ENCODE measurements at regions of chr14 and their contacts with region 1.

Region 1: GRCh38 chr14:49867831-49868723 is 15.5 kb upstream of the NEMF start:
- DNase-seq: peak; percentile 99
- H3K4me3 Mint-ChIP-seq: peak overlapping the region; percentile 92
- H3K27ac Mint-ChIP-seq: peak overlapping the region; percentile 94
- H3K4me1 Mint-ChIP-seq: peaks cover 20% of the 10 kb centered on the region
- H3K27me3 Mint-ChIP-seq: no peaks in the 10 kb centered on the region

Region 2: GRCh38 chr14:49786315-49787110 is 81.6 kb before region 1 on chr14:
- CTCF ChIA-PET with region 1: no interaction called
- intact Hi-C with region 1: no loop called
- DNase-seq: no peak
- H3K4me3 Mint-ChIP-seq: no peak overlapping the region
- H3K27ac Mint-ChIP-seq: no peak overlapping the region
- H3K4me1 Mint-ChIP-seq: no peaks in the 10 kb centered on the region
- H3K27me3 Mint-ChIP-seq: no peaks in the 10 kb centered on the region

Region 3: DNA sequence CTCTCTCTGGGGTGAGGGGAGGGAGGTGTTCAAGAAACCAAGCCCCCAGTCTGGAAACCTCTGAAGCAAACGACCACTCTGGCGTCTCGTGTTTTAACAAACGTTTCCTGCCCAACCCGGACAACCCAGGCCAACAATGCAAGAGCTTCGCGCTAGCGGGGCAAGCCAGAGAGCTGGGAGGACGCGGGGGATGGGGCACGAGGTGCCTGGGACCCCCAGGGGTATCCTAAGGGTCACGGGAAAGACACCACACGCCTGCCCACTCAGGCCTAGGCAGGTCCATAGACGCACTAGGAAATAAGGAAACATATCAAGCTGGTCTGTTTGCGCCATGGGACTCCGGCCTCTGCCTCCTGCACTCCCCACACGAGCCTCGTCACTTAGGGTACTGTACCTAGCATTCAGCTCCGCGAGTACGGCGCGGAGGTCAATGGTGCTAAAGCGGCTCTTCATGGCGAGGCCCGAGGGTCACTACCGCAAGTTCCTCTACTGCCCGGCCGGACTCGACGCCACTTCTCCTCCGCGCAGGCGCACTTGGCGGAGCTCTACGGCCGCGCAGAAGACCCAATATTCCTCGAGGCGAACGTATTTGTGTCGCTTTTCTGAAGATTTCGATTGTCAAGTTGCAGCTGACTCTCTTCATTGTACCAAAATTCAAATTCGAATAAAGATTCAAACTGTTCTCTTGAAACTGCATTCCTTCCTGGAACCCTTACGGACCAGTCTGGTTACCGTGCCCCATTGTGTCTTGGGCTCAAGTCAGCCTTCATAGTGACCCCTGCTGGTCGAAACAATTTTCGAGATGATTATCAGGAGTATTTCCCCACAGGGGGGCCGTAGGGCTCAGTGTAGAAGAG is 15.5 kb before region 1 on chr14 and contains the start of gene NEMF:
- CTCF ChIA-PET with region 1: interaction called, 182 read pairs
- intact Hi-C with region 1: no loop called
- DNase-seq: peak; percentile 90
- H3K4me3 Mint-ChIP-seq: peak within 1 kb of the TSS; percentile 98
- H3K27ac Mint-ChIP-seq: peak within 1 kb of the TSS; percentile 97
- H3K4me1 Mint-ChIP-seq: peaks cover 37% of the 10 kb centered on the region
- H3K27me3 Mint-ChIP-seq: no peaks in the 10 kb centered on the region
- total RNA-seq, gene NEMF: 45.5 to 47.0 TPM

Region 4: GRCh38 chr14:49892636-49893308 is 24.7 kb after region 1 on chr14 and contains the start of gene ARF6:
- CTCF ChIA-PET with region 1: interaction called, 22 read pairs
- intact Hi-C with region 1: loop called (anchors 1 kb)
- DNase-seq: peak; percentile 98
- H3K4me3 Mint-ChIP-seq: peak within 1 kb of the TSS; percentile 100
- H3K27ac Mint-ChIP-seq: peak within 1 kb of the TSS; percentile 100
- H3K4me1 Mint-ChIP-seq: peaks cover 19% of the 10 kb centered on the region
- H3K27me3 Mint-ChIP-seq: no peaks in the 10 kb centered on the region
- total RNA-seq, gene ARF6: 128 to 129 TPM

Region 5: GRCh38 chr14:49971156-49972130 is 103.4 kb after region 1 on chr14:
- CTCF ChIA-PET with region 1: interaction called, 11 read pairs
- intact Hi-C with region 1: loop called (anchors 1 kb)
- DNase-seq: peak; percentile 69
- H3K4me3 Mint-ChIP-seq: peak overlapping the region; percentile 73
- H3K27ac Mint-ChIP-seq: peak overlapping the region; percentile 97
- H3K4me1 Mint-ChIP-seq: peaks cover 59% of the 10 kb centered on the region
- H3K27me3 Mint-ChIP-seq: no peaks in the 10 kb centered on the region

Region 6: GRCh38 chr14:50099335-50099734 is 231.3 kb after region 1 on chr14:
- CTCF ChIA-PET with region 1: interaction called, 49 read pairs
- intact Hi-C with region 1: no loop called
- DNase-seq: no peak
- H3K4me3 Mint-ChIP-seq: no peak overlapping the region
- H3K27ac Mint-ChIP-seq: no peak overlapping the region
- H3K4me1 Mint-ChIP-seq: peaks cover 57% of the 10 kb centered on the region
- H3K27me3 Mint-ChIP-seq: no peaks in the 10 kb centered on the region

Region 7: DNA sequence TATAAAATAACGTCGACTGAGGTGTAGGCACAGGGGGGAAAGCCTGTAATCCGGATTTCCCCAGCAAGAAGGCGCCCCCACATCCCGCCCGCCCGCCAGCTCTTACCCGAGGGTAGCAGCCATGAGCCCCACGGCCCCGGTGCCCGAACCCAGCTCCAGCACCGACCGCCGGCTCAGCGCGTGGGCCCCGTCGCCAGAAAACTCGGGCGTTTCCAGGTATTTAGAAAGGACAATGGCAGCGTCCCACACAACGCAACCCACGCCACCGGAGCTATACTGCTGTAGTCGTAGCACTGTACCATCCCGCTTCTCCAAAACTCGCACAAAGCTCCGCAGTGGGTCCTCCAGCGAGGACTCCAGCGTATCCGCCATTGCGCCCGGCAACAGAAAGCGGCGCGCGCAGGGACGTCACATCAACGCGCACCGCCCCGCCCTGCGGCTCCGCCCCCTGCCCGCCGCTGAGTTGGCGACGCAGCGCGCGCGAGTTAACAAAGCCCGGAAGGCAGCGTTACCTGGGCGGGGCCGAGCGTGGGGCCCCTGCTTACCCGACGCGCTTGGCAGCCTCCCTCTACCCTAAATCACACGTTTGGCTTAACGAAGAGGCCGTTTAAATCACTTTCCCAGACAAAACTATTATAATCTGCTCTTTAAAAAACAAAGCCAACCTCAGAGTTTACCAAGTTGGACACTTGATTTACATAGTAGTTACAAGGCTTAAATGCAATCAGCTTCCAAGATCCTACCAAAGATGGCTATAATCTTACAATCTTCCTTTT is 248.3 kb after region 1 on chr14 and contains the start of gene VCPKMT:
- CTCF ChIA-PET with region 1: interaction called, 7 read pairs
- intact Hi-C with region 1: loop called (anchors 1 kb)
- DNase-seq: peak; percentile 96
- H3K4me3 Mint-ChIP-seq: peak within 1 kb of the TSS; percentile 98
- H3K27ac Mint-ChIP-seq: peak within 1 kb of the TSS; percentile 94
- H3K4me1 Mint-ChIP-seq: peaks cover 32% of the 10 kb centered on the region
- H3K27me3 Mint-ChIP-seq: no peaks in the 10 kb centered on the region
- total RNA-seq, gene VCPKMT: 9.6 to 10.5 TPM

Region 8: DNA sequence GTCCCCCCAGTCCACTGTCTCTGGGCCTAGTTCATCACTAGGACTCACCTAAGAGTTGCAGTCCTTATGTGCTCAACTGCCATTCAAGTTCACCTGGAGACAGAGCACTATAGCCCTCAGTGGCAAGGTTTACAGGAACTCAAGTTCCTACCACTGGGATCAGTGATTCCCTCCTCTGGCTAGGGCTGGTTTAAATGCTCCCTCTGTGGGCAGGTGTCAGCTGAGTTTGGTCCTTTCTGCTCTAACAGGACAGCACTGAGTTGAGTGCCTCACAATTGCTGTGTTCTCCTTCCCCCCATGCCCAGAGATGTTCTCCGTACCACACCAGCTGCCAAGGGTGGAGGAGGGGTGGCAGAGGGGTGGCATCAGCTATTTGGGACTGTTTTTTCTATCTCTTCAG is 820.8 kb after region 1 on chr14:
- CTCF ChIA-PET with region 1: no interaction called
- intact Hi-C with region 1: no loop called
- DNase-seq: no peak
- H3K4me3 Mint-ChIP-seq: no peak overlapping the region
- H3K27ac Mint-ChIP-seq: no peak overlapping the region
- H3K4me1 Mint-ChIP-seq: no peaks in the 10 kb centered on the region
- H3K27me3 Mint-ChIP-seq: peaks cover 3% of the 10 kb centered on the region

Region 9: DNA sequence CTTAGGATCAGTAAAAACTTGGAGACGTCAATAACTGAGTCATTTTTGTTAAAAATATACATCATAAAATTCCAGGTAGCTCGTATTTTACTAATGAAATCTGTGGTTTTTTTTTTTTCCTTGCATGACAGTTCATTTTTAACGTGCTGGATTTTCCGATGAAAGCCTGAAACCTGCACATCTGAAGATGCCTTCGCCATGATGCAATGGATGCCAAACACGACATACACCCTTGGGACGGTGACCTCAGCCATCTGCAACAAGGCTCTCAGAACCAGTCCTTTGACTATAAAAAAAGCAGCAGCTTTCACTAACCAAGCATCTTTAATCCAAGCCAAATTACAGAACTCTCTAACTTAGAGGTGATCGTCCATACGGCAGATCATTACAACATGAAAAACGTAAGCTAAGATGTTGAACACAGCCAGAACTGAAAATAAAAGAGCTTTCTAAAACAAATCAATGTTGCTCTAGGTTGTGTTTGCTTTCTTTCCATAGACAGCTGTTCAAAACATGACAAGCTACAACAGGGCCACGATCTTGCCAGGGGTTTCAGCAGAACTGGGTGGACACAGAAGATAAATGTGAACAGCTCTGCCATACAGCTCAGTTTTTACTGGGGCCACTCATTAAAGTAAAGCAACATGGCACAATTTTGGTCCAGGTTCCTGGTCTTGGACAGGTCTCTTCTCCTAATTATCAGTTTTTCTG is 955.1 kb after region 1 on chr14:
- CTCF ChIA-PET with region 1: no interaction called
- intact Hi-C with region 1: loop called (anchors 10 kb)
- DNase-seq: peak; percentile 30
- H3K4me3 Mint-ChIP-seq: peak overlapping the region; percentile 59
- H3K27ac Mint-ChIP-seq: peak overlapping the region; percentile 73
- H3K4me1 Mint-ChIP-seq: peaks cover 89% of the 10 kb centered on the region
- H3K27me3 Mint-ChIP-seq: no peaks in the 10 kb centered on the region

Measured in activated naive CD4-positive, alpha-beta T cell treated with anti-CD3 and anti-CD28 coated beads for 36 hours (primary cell).